GM12878 (cell line): ENCODE measurements at regions of chr17 and their contacts with region 1.

Region 1: DNA sequence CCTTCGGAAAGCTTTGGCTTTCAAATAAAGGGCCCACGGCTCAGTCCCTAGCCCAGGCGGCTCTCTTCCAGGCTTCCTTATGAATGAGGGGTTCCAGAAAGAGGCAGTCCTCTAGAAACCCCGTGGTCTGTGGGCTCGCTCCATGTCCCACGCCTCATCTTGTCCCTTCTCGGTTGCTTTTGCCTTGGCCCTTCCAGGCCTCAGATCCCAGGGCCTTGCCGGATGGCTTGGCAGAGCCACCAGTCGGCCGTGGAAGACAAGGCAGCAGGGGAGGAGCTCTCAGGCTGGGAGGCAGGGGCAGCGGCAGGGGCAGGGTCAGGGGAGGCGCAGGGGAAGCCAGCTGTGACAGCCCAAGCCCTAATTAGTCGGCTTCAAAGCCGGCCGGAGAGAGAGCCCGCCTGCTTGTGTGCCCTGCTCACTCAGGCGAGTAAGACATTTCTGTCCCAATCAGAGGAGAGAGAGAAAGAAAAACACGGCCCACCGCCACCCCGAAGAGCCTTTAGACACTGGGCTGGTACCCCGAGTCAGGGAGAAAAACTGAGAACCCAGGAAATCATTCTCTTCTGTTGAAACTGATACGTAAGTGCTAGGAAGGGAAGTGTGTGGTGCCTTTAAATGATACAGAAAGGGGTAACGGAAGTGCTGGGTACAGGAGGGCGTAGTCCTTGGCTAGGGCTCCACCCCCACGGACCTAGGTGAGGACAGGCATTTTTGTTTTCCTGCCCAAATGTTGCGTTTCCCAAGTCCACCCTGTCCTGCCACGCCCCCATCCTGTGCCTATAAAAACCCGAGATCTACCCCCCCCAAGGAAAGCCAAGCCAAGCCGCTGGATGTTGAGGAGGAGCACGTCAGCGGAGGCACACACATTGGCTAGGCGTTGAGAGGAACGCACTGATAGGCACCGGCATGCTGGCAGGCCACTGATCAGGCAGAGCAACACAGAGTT is 27.8 kb upstream of the MEIOC start:
- DNase-seq: peak; percentile 46
- ATAC-seq: peak; percentile 100
- H3K4me3 ChIP-seq: peak overlapping the region; percentile 57
- H3K27ac ChIP-seq: peak overlapping the region; percentile 61
- H3K4me1 ChIP-seq: peaks cover 9% of the 10 kb centered on the region
- H3K27me3 ChIP-seq: no peaks in the 10 kb centered on the region
- CTCF ChIP-seq: no peak
- EP300 ChIP-seq: no peak
- POLR2A ChIP-seq: peak; percentile 65
- RAD21 ChIP-seq: no peak

Region 2: DNA sequence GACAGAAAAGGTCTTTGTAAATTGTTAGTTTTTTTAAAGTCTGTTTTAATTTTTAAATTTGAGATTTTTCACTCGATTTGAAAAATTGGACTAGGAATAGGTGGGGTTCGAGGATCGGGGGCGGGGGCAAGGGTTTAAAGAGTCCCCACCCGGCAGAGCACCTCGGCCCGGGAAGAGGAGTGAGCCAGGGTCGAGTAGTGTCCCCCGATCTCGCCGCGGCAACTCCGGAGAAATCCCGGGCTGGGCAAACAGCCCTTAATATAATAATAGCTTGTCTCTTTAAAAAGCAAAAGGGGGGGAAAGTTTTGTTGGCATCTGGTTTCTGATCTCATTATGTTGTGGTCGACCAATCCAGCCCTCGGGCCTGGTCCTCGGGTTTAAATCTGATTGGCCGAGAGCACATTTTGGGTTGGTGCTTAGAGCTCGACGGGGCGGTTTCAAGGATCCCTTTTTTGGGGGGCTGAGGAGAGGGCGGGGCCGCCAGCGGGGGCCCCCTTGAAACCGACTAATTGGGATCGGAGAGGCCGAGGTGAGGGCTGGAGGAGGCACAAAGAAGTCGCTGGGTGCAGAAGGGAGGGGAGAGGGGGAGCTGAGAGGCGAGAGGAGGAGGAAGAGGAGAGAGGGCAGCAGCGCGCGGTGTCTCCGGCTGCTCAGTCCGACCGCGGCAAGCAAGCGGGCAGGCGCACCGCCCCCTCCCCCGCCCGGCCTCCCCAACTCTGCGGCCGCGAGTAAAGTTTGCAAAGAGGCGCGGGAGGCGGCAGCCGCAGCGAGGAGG is 71.5 kb before region 1 on chr17 and contains the start of gene FZD2:
- CTCF ChIA-PET with region 1: no interaction called
- POLR2A ChIA-PET with region 1: no interaction called
- RAD21 ChIA-PET with region 1: no interaction called
- SMC1A ChIA-PET with region 1: no interaction called
- in situ Hi-C with region 1: no loop called
- intact Hi-C with region 1: loop called (anchors 5 kb)
- DNase-seq: peak; percentile 64
- ATAC-seq: peak; percentile 95
- H3K4me3 ChIP-seq: peak within 1 kb of the TSS; percentile 82
- H3K27ac ChIP-seq: peak within 1 kb of the TSS; percentile 59
- H3K4me1 ChIP-seq: no peaks in the 10 kb centered on the region
- H3K27me3 ChIP-seq: peaks cover 3 to 10% of the 10 kb centered on the region in 2 experiments
- CTCF ChIP-seq: no peak
- EP300 ChIP-seq: no peak
- POLR2A ChIP-seq: peak; percentile 53
- RAD21 ChIP-seq: no peak
- polyA plus RNA-seq, gene FZD2: 0.09 TPM in 1 of 2 experiments, not detected in the other

Region 3: DNA sequence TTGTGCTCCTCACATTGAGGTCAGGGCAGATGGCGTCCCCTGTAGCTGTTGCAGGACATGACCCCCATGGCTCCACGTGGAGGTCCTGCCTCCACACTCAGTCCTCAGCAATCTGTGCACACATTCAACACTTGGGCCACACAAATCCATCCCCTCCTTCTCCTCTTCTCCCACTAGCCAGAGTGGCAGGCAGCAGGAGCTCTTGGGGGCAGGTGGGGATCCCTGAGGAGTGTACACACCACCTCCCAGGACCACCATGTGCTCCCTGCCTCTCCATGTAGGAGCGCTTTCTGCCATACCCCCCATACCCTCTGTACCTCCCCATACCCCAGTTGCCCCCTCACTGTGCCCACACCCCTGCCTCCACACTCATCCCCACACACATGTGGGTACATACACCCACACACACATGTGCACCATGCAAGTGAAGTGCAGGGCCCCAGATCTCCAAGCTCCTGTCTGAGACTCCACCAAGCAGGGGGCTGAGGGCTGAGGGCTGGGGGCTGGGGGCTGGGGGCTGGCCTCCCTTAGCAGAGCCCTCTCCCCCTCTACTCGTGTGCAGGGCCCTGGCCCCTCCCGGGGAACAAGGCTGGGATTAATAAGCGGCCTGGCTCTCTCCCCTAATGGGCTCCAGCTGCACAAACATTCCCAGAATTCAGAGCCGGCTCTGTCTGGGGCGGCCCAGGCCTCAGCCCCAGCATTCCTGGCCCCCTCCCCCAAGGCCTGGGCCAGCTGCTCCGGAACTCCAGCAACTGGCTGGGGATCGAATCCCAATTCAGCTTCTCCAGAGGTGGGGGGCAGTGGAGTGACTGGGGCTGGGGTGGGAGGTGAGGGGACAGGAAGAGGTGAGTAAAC is 20.5 kb before region 1 on chr17:
- CTCF ChIA-PET with region 1: no interaction called
- POLR2A ChIA-PET with region 1: no interaction called
- RAD21 ChIA-PET with region 1: no interaction called
- SMC1A ChIA-PET with region 1: no interaction called
- in situ Hi-C with region 1: no loop called
- intact Hi-C with region 1: no loop called
- DNase-seq: no peak
- ATAC-seq: no peak
- H3K4me3 ChIP-seq: no peak overlapping the region
- H3K27ac ChIP-seq: no peak overlapping the region
- H3K4me1 ChIP-seq: no peaks in the 10 kb centered on the region
- H3K27me3 ChIP-seq: no peaks in the 10 kb centered on the region; a peak in 1 of 4 replicates
- CTCF ChIP-seq: no peak
- EP300 ChIP-seq: no peak
- POLR2A ChIP-seq: no peak
- RAD21 ChIP-seq: no peak

Region 4: DNA sequence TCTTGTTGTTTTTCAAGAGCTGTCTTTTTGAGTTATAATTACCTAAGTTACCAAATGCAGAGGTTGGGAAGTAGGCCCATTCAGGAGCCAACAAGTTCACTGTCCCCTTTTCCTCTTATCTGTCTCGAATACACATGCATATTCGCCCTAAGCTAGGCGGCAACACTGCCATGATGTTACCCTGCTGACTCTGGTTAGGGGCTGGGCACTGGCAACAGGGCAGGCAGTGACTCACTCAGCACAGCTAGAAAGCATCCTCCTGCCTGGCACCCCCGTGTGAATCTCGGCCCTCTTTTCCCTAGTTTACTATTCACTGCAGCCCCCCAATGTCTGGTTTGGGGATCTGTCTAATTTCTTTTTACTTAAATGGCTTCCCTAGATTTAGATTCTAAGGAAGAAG is 93.7 kb after region 1 on chr17:
- CTCF ChIA-PET with region 1: no interaction called
- POLR2A ChIA-PET with region 1: no interaction called
- RAD21 ChIA-PET with region 1: no interaction called
- SMC1A ChIA-PET with region 1: no interaction called
- in situ Hi-C with region 1: no loop called
- intact Hi-C with region 1: no loop called
- DNase-seq: no peak
- ATAC-seq: no peak
- H3K4me3 ChIP-seq: no peak overlapping the region
- H3K27ac ChIP-seq: no peak overlapping the region
- H3K4me1 ChIP-seq: no peaks in the 10 kb centered on the region
- H3K27me3 ChIP-seq: no peaks in the 10 kb centered on the region
- CTCF ChIP-seq: no peak
- EP300 ChIP-seq: no peak
- POLR2A ChIP-seq: no peak
- RAD21 ChIP-seq: no peak